Activated CD8-positive, alpha-beta T cell treated with anti-CD3 and anti-CD28 coated beads for 36 hours (primary cell): ENCODE measurements at regions of chr18 and their contacts with region 1.

Region 1: GRCh38 chr18:9109523-9109922 is 7.0 kb downstream of the NDUFV2 start:
- DNase-seq: no peak
- ATAC-seq: peak; percentile 37
- H3K4me3 Mint-ChIP-seq: peak overlapping the region; percentile 46
- H3K27ac Mint-ChIP-seq: peak overlapping the region; percentile 76
- H3K4me1 Mint-ChIP-seq: peaks cover 85% of the 10 kb centered on the region
- H3K27me3 Mint-ChIP-seq: no peaks in the 10 kb centered on the region
- CTCF ChIP-seq: no peak

Region 2: GRCh38 chr18:9082711-9083510 is 26.6 kb before region 1 on chr18:
- CTCF ChIA-PET with region 1: interaction called, 27 read pairs
- POLR2A ChIA-PET with region 1: interaction called, 43 read pairs
- intact Hi-C with region 1: no loop called
- DNase-seq: peak; percentile 85
- ATAC-seq: peak; percentile 86
- H3K4me3 Mint-ChIP-seq: peak overlapping the region; percentile 55
- H3K27ac Mint-ChIP-seq: peak overlapping the region; percentile 94
- H3K4me1 Mint-ChIP-seq: peaks cover 38% of the 10 kb centered on the region
- H3K27me3 Mint-ChIP-seq: no peaks in the 10 kb centered on the region
- CTCF ChIP-seq: no peak

Region 3: GRCh38 chr18:9095297-9096006 is 14.1 kb before region 1 on chr18:
- CTCF ChIA-PET with region 1: interaction called, 7 read pairs
- POLR2A ChIA-PET with region 1: interaction called, 44 read pairs
- intact Hi-C with region 1: no loop called
- DNase-seq: peak; percentile 89
- ATAC-seq: peak; percentile 71
- H3K4me3 Mint-ChIP-seq: peak overlapping the region; percentile 51
- H3K27ac Mint-ChIP-seq: peak overlapping the region; percentile 96
- H3K4me1 Mint-ChIP-seq: peaks cover 56% of the 10 kb centered on the region
- H3K27me3 Mint-ChIP-seq: no peaks in the 10 kb centered on the region
- CTCF ChIP-seq: no peak

Region 4: GRCh38 chr18:9126337-9126736 is 16.8 kb after region 1 on chr18:
- CTCF ChIA-PET with region 1: interaction called, 5 read pairs
- POLR2A ChIA-PET with region 1: interaction called, 278 read pairs
- intact Hi-C with region 1: no loop called
- DNase-seq: no peak
- ATAC-seq: no peak
- H3K4me3 Mint-ChIP-seq: no peak overlapping the region
- H3K27ac Mint-ChIP-seq: peak overlapping the region; percentile 42
- H3K4me1 Mint-ChIP-seq: peaks cover 54% of the 10 kb centered on the region
- H3K27me3 Mint-ChIP-seq: no peaks in the 10 kb centered on the region
- CTCF ChIP-seq: no peak